Panc1 (cell line): ENCODE measurements at regions of chr19 and their contacts with region 1.

Region 1: GRCh38 chr19:39307046-39307823 is 11.0 kb downstream of the IFNL1 start:
- DNase-seq: no peak
- ATAC-seq: peak; percentile 2; the same call in 1 of the 2 replicates
- H3K4me3 ChIP-seq: no peak overlapping the region
- H3K27ac ChIP-seq: no peak overlapping the region
- H3K4me1 ChIP-seq: peaks cover 9% of the 10 kb centered on the region; the same call in 1 of the 2 replicates
- H3K27me3 ChIP-seq: peaks cover 9% of the 10 kb centered on the region; the same call in 1 of the 2 replicates
- CTCF ChIP-seq: no peak

Region 2: DNA sequence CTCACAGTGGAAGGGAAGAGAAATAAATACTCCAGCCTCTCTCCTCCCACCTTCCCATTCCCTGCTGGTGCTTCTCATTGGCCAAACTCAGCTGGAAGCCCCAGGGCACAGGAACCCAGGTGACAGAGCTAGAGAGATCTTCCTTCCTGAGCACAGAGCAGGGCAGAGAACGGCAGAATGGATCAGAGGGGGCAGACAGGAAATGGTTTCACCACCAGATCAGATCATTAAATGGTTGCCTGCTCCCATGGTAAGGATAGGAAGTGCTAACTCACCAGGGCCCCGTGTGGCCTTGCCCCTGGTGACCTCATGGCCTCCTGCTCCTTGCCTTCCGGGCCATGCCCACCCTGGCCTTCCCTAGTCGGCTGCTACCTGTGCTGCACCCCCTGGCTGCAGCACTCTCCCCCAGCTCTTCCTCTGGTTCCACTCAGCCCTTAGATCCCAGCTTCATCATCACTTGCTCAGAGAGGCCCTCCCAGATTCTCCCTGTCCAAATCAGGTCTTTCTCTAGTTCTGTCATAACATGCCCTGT is 1191.9 kb before region 1 on chr19:
- CTCF ChIA-PET with region 1: no interaction called
- POLR2A ChIA-PET with region 1: no interaction called
- in situ Hi-C with region 1: no loop called
- intact Hi-C with region 1: no loop called
- DNase-seq: no peak
- ATAC-seq: no peak
- H3K4me3 ChIP-seq: no peak overlapping the region
- H3K27ac ChIP-seq: no peak overlapping the region
- H3K4me1 ChIP-seq: no peaks in the 10 kb centered on the region
- H3K27me3 ChIP-seq: no peaks in the 10 kb centered on the region
- CTCF ChIP-seq: no peak

Region 3: GRCh38 chr19:39070888-39071287 is 236.3 kb before region 1 on chr19:
- CTCF ChIA-PET with region 1: no interaction called
- POLR2A ChIA-PET with region 1: interaction called, 11 read pairs
- in situ Hi-C with region 1: no loop called
- intact Hi-C with region 1: no loop called
- DNase-seq: no peak
- ATAC-seq: peak; percentile 37
- H3K4me3 ChIP-seq: no peak overlapping the region
- H3K27ac ChIP-seq: peak overlapping the region; percentile 24
- H3K4me1 ChIP-seq: peaks cover 32% of the 10 kb centered on the region
- H3K27me3 ChIP-seq: no peaks in the 10 kb centered on the region
- CTCF ChIP-seq: no peak

Region 4: GRCh38 chr19:39328046-39328705 is 20.9 kb after region 1 on chr19:
- CTCF ChIA-PET with region 1: interaction called, 27 read pairs
- POLR2A ChIA-PET with region 1: interaction called, 19 read pairs
- in situ Hi-C with region 1: no loop called
- intact Hi-C with region 1: no loop called
- DNase-seq: peak; percentile 97
- ATAC-seq: peak; percentile 84
- H3K4me3 ChIP-seq: no peak overlapping the region
- H3K27ac ChIP-seq: peak overlapping the region; percentile 2
- H3K4me1 ChIP-seq: peaks cover 7% of the 10 kb centered on the region; the same call in 1 of the 2 replicates
- H3K27me3 ChIP-seq: no peaks in the 10 kb centered on the region
- CTCF ChIP-seq: no peak

Region 5: GRCh38 chr19:39372047-39372802 is 65.0 kb after region 1 on chr19:
- CTCF ChIA-PET with region 1: no interaction called
- POLR2A ChIA-PET with region 1: no interaction called
- in situ Hi-C with region 1: loop called (anchors 5 kb)
- intact Hi-C with region 1: no loop called
- DNase-seq: no peak
- ATAC-seq: peak; percentile 2
- H3K4me3 ChIP-seq: no peak overlapping the region
- H3K27ac ChIP-seq: no peak overlapping the region
- H3K4me1 ChIP-seq: no peaks in the 10 kb centered on the region
- H3K27me3 ChIP-seq: no peaks in the 10 kb centered on the region
- CTCF ChIP-seq: no peak

Region 6: DNA sequence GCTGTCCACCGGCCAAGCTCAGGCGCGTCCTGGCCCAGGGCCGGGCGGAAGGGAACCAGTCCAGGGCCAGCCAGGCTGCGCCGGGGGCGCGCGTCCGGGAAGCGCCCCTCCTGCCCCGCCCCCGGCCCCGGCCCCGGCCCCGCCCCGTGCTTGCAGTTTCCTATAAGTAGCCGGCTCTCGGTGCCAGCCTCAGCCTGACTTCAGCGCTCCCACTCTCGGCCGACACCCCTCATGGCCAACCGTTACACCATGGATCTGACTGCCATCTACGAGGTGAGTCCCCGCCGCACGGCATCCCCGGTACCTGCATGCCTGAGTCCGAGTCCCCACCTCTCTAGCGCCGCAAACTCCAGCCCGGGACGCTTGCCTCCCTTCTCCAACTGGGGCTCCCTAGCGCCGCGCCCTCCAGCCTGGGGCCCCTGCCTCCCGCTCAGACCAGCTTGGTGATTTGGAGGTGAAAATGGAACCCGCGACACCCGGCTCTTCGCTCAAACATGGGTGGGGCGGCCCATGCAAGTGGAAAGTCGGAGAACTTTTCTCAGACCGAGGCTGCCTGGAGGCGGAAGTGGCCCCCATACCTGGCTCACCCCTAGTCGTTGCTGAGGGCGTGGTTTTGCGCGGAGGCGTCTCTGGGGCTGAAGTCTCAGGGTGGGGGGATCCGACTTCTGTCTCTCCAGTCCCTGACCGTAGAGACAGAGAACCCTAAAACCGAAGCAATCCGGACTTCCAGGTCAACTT is 99.6 kb after region 1 on chr19 and contains the start of gene ZFP36:
- CTCF ChIA-PET with region 1: interaction called, 10 read pairs
- POLR2A ChIA-PET with region 1: interaction called, 18 read pairs
- in situ Hi-C with region 1: no loop called
- intact Hi-C with region 1: no loop called
- DNase-seq: peak; percentile 100
- ATAC-seq: peak; percentile 37
- H3K4me3 ChIP-seq: peak within 1 kb of the TSS; percentile 42 to 55
- H3K27ac ChIP-seq: peak within 1 kb of the TSS; percentile 92
- H3K4me1 ChIP-seq: peaks cover 76% of the 10 kb centered on the region
- H3K27me3 ChIP-seq: no peaks in the 10 kb centered on the region
- CTCF ChIP-seq: no peak
- total RNA-seq, gene ZFP36: 414 TPM

Region 7: DNA sequence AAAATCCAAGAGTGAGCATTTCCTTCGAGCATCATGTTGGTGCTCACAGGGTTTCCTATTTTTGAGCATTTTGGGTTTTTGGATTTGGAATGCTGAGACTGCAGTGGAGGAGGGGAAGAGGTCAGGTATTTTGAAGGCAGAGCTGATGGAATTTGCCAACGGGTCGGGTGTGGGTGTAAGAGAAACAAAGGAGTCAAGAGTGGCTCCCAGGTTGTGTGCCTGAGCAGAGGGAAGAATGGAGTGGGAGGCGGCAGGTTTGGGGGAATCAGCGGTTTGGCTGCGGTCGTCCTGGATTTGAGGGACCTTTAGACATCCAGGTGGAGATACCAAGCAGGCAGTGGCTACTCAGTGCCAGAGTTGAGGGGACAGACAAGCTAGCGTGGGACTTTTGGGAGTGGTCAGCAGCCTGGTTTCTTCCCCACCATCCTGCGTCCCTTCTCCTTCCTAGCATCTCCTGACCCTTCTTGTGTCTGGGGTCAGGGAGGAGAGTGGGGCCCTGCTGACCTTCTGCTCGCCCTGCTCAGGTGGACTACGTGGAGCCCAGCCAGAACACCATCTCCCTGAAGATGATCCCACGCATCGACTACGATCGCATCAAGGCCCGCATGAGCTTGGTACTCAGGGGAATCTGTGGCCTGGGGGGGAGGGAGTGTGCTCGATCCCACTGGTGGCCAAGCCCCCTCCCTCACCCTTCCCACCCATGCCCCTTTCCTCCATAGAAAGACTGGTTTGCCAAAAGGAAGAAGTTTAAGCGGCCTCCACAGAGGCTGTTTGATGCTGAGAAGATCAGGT is 158.9 kb after region 1 on chr19:
- CTCF ChIA-PET with region 1: no interaction called
- POLR2A ChIA-PET with region 1: no interaction called
- in situ Hi-C with region 1: no loop called
- intact Hi-C with region 1: no loop called
- DNase-seq: no peak
- ATAC-seq: no peak
- H3K4me3 ChIP-seq: no peak overlapping the region
- H3K27ac ChIP-seq: no peak overlapping the region
- H3K4me1 ChIP-seq: no peaks in the 10 kb centered on the region
- H3K27me3 ChIP-seq: no peaks in the 10 kb centered on the region
- CTCF ChIP-seq: no peak

Region 8: DNA sequence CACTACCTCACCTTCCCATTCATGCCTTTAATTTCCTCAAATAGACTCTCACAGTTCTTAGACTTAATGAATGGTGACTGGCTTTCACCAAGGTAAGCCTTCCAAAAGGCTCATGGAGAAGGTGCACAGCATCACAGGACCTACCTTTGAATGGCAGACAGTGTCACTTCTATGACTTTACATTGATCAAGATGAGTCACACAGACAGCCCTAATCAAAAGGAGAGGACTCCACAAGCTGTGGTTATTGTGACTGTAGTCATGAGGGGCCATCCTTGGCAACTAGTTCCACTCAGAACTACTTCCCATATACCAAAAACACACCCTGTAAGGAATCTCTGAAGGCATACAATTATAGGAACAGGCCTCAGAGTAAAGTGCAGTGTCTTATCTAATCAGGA is 354.3 kb after region 1 on chr19:
- CTCF ChIA-PET with region 1: no interaction called
- POLR2A ChIA-PET with region 1: no interaction called
- in situ Hi-C with region 1: no loop called
- intact Hi-C with region 1: no loop called
- DNase-seq: no peak
- ATAC-seq: no peak
- H3K4me3 ChIP-seq: no peak overlapping the region
- H3K27ac ChIP-seq: no peak overlapping the region
- H3K4me1 ChIP-seq: no peaks in the 10 kb centered on the region
- H3K27me3 ChIP-seq: peaks cover 71% of the 10 kb centered on the region
- CTCF ChIP-seq: 0 out of 2 replicates have a peak, but pooled peaks have one; percentile 19

Region 9: DNA sequence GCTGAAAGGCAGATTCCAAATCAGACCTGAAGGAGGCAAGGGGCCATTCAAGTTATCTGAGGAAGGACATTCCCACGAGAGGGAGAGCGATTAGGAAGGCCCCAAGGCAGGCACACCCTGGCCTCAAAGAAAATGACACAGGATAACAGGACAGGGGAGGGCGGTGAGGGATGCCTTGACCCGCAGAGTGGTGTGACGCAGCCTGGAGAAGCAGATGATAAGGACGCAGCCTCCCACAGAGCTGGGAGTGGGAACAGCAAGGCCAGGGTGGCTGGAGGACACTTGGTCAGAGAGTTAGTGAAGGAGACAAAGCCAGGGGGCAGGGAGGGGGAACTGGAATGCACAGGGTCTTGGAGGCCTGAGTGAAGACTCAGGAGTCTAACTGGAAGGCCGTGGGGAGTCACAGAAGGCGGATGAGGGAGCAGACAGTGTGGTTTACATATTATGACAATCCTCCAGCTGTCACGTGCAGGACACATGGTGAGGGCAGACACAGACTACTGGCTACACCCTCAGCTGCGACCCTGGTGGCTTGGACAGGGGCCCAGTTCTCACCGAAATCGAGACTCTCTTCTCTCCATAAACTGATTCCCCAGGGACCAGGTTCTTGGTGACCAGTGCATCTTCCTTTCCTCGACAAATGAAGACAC is 532.6 kb after region 1 on chr19:
- CTCF ChIA-PET with region 1: interaction called, 10 read pairs
- POLR2A ChIA-PET with region 1: no interaction called
- in situ Hi-C with region 1: no loop called
- intact Hi-C with region 1: no loop called
- DNase-seq: no peak
- ATAC-seq: no peak
- H3K4me3 ChIP-seq: no peak overlapping the region
- H3K27ac ChIP-seq: no peak overlapping the region
- H3K4me1 ChIP-seq: peaks cover 37% of the 10 kb centered on the region
- H3K27me3 ChIP-seq: no peaks in the 10 kb centered on the region
- CTCF ChIP-seq: no peak